ENCODE measurements at regions of chr22 and their contacts with region 1.

Region 1: GRCh38 chr22:37428649-37429586 is 1.6 kb upstream of the ELFN2 start:
- DNase-seq: peak; percentile 88
- H3K4me3 ChIP-seq: no peak overlapping the region; a peak in 1 of 4 replicates
- H3K27ac ChIP-seq: no peak overlapping the region
- H3K4me1 ChIP-seq: peaks cover 0 to 6% of the 10 kb centered on the region in 2 experiments; a peak in 1 of 4 replicates
- H3K27me3 ChIP-seq: no peaks in the 10 kb centered on the region; the same call in 1 of the 2 replicates
- CTCF ChIP-seq: peak; percentile 89
- EP300 ChIP-seq: no peak
- RAD21 ChIP-seq: peak; percentile 71

Region 2: GRCh38 chr22:37330200-37331033 is 98.5 kb before region 1 on chr22:
- CTCF ChIA-PET with region 1: interaction called, 287 read pairs
- POLR2A ChIA-PET with region 1: no interaction called
- DNase-seq: peak; percentile 86
- H3K4me3 ChIP-seq: no peak overlapping the region
- H3K27ac ChIP-seq: no peak overlapping the region
- H3K4me1 ChIP-seq: peaks cover 13 to 26% of the 10 kb centered on the region in 2 experiments; a peak in 3 of 4 replicates
- H3K27me3 ChIP-seq: no peaks in the 10 kb centered on the region
- CTCF ChIP-seq: peak; percentile 30; the same call in 1 of the 2 replicates
- EP300 ChIP-seq: no peak
- RAD21 ChIP-seq: no peak

Region 3: DNA sequence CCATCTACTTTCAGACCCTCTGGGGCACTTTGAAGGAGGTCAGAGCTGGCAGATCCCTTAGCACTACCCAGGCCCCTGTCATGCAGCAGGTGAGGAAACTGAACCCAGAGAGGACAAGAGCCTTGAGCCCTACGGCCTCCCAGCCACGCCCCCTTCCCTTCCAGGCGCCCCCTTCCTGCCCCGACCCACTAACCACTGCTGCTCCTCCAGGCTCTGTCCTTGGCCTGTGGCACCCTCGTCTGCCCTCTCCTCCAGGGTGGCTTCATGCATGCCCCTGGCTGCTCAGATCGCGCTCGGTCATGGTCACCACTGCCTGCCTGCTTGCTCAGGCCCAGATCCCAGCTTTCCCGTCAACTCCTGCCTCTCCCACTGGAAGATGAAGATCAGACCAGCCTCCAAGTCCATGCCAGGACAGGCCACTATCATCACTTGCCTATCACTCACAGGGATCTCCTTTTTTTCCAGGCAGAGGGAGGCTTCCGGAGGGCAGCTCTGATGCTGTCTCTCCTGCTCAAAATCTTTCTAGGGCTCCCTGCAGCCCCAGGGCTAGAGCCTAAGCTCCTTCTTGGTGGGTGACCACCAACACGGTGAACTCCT is 32.3 kb before region 1 on chr22:
- CTCF ChIA-PET with region 1: interaction called, 16 read pairs
- POLR2A ChIA-PET with region 1: no interaction called
- DNase-seq: peak; percentile 77
- H3K4me3 ChIP-seq: no peak overlapping the region
- H3K27ac ChIP-seq: no peak overlapping the region
- H3K4me1 ChIP-seq: peaks cover 0 to 19% of the 10 kb centered on the region in 2 experiments; a peak in 1 of 4 replicates
- H3K27me3 ChIP-seq: no peaks in the 10 kb centered on the region
- CTCF ChIP-seq: no peak
- EP300 ChIP-seq: no peak
- RAD21 ChIP-seq: no peak

Region 4: DNA sequence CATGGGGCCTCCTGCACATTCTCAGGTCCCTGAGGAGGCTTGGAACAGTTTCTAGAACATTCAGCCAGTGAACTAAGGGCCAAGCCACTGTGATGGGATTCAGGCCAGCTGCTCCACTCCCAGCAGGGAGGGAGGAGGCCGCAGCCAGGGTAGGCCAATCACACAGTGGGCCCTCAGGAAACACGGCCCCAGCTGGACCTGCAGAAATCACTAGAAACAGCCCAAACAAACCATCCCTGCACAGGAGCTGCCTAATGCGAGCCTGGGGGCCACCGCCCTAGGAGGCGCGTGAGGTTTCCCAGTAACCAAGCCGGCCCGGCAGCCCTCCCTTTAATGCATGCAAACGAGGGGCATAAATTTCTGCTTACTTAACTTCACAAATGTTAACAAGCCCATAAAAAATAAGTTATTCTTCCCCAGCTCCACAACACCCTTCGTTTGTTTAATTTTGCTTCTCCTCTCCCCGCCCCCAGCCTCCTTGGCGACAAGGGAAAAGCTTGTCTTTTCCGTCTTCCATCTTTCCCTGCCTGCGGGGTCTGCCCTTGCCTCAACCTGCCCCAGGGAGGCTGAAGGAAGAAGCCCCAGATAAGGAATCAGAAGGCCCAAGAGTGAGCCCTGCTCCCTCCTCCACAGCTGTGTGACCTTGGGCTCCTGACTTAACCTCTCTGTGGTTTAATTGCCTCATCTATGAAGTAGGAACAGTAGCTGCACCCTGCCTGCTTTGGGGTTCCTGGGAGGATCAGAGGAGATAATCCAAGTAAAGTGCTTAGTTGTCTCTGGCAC is 27.3 kb before region 1 on chr22:
- CTCF ChIA-PET with region 1: interaction called, 16 read pairs
- POLR2A ChIA-PET with region 1: no interaction called
- DNase-seq: no peak
- H3K4me3 ChIP-seq: no peak overlapping the region
- H3K27ac ChIP-seq: no peak overlapping the region
- H3K4me1 ChIP-seq: peaks cover 0 to 12% of the 10 kb centered on the region in 2 experiments; a peak in 1 of 4 replicates
- H3K27me3 ChIP-seq: no peaks in the 10 kb centered on the region
- CTCF ChIP-seq: no peak
- EP300 ChIP-seq: no peak
- RAD21 ChIP-seq: no peak

Region 5: DNA sequence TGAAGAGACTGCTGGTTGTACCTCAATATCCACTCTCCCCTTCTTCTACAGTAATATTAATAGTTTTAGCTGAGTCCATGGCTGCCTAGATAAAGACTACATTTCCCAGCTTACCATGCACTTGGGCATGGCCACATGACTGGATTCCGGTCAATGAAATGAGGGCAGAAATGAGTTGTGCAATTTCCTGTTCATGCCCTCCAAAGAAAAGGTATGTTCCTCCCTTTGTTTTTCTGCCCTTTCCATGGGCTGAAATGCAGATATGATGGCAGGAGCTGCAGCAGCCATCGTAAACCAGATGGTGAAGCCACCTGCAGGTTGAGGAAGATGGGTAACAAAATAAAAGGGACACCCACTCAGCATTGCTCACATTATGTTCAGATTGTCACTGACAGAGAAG is 13.6 kb after region 1 on chr22:
- CTCF ChIA-PET with region 1: interaction called, 57 read pairs
- POLR2A ChIA-PET with region 1: no interaction called
- DNase-seq: no peak
- H3K4me3 ChIP-seq: no peak overlapping the region
- H3K27ac ChIP-seq: no peak overlapping the region
- H3K4me1 ChIP-seq: no peaks in the 10 kb centered on the region
- H3K27me3 ChIP-seq: no peaks in the 10 kb centered on the region
- CTCF ChIP-seq: no peak
- EP300 ChIP-seq: no peak
- RAD21 ChIP-seq: no peak

Region 6: DNA sequence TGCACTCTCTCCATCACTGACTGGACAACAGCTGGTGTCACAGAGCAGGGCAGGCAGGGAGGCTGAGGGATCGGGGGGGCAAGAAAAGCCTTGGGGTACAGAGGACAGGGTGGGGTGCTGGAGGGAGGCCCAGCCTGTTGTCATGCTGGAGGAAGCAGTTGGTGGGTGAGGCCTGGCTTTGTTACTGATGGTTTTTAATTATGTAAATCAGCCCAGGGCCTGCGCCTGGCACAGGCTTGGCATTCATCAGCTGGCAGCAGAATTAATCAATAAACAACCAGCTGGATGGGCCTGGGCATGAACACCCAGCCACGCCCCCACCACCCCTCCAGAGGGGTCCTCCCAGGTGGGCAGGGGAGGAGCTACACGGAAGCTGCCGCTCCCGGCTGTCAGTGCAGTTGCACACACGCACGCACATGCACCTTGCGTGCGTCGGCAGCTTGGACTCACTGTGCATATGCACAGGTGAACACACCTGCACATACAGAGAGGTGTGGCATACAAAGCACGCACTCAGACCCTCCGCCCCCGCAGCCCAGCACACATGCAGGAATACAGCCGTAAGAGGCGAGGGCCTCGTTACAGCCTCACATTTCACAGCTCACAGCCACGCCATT is 19.7 kb after region 1 on chr22:
- CTCF ChIA-PET with region 1: interaction called, 13 read pairs
- POLR2A ChIA-PET with region 1: no interaction called
- DNase-seq: no peak
- H3K4me3 ChIP-seq: no peak overlapping the region
- H3K27ac ChIP-seq: no peak overlapping the region
- H3K4me1 ChIP-seq: no peaks in the 10 kb centered on the region; a peak in 1 of 4 replicates
- H3K27me3 ChIP-seq: no peaks in the 10 kb centered on the region
- CTCF ChIP-seq: no peak
- EP300 ChIP-seq: no peak
- RAD21 ChIP-seq: no peak

Region 7: DNA sequence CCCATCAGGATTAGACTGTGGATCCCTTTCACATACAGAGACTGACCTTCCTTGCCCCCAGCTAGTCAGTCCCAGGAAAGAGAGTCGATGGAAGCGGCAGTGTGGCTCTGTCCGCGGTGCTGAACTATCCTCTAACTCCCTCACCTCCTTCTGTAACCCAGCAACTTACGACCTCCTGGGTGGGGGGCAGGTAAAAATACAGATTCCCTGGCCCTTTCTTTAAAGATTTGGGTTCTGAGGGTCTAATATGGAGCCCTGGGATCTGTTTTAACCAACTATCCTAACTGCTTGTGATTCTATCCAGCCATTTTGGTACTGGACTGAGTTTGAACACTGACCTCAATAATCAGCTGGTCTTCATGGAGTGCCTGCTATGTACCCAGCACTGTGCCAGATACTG is 34.1 kb after region 1 on chr22:
- CTCF ChIA-PET with region 1: interaction called, 33 read pairs
- POLR2A ChIA-PET with region 1: no interaction called
- DNase-seq: no peak
- H3K4me3 ChIP-seq: no peak overlapping the region
- H3K27ac ChIP-seq: peak overlapping the region in 1 of 2 experiments; percentile 78; a peak in 2 of 4 replicates
- H3K4me1 ChIP-seq: peaks cover 0 to 27% of the 10 kb centered on the region in 2 experiments; a peak in 1 of 4 replicates
- H3K27me3 ChIP-seq: 0 out of 2 replicates have a peak, but pooled peaks cover 7% of the 10 kb centered on the region
- CTCF ChIP-seq: no peak
- EP300 ChIP-seq: no peak
- RAD21 ChIP-seq: no peak

Region 8: DNA sequence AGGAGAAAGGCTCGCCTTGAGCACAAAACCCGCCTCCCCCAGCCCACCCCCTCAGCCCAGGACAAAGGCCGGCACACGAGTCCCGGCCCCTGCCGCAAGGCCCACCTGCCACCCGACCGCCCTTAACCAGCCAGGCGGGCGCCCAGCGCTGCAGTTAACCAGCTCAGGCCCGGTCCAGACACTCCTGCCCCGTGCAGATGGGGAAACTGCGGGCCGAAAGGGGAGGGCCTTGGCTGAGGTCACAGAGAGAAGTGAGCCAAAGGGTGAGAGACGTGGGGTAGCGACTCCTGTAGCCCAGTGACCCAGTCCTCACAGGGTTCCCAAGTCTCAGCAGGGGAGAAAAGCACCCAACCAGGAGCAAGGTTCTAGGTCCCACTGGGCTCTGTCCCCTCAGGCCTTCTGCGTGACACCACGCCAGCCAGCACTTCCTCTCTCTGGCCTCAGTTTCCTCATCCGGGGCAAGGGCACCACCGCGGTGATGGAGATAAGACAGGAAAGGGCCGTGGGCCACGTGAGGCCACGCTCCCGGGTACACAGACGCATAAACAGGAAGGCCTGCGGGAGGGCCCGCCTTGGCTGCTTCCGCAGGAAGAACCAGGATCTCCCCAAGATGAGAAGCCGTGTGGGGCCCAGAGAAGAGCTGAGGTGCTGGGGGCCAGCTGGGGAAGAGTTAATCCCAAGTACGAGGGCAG is 55.4 kb after region 1 on chr22:
- CTCF ChIA-PET with region 1: no interaction called
- POLR2A ChIA-PET with region 1: no interaction called
- DNase-seq: no peak
- H3K4me3 ChIP-seq: no peak overlapping the region
- H3K27ac ChIP-seq: no peak overlapping the region
- H3K4me1 ChIP-seq: peaks cover 0 to 13% of the 10 kb centered on the region in 2 experiments; a peak in 1 of 4 replicates
- H3K27me3 ChIP-seq: no peaks in the 10 kb centered on the region
- CTCF ChIP-seq: no peak
- EP300 ChIP-seq: no peak
- RAD21 ChIP-seq: no peak

Measured in SK-N-SH (cell line).